ENCODE measurements at regions of chr14 and their contacts with region 1.

Region 1: GRCh38 chr14:33848706-33849454 is 102.0 kb downstream of the EGLN3 start:
- DNase-seq: peak; percentile 27
- H3K4me3 Mint-ChIP-seq: no peak overlapping the region
- H3K27ac Mint-ChIP-seq: no peak overlapping the region
- H3K4me1 Mint-ChIP-seq: peaks cover 2% of the 10 kb centered on the region
- H3K27me3 Mint-ChIP-seq: peaks cover 33% of the 10 kb centered on the region

Region 2: GRCh38 chr14:34098045-34098984 is 249.4 kb after region 1 on chr14:
- CTCF ChIA-PET with region 1: interaction called, 92 read pairs
- DNase-seq: peak; percentile 52
- H3K4me3 Mint-ChIP-seq: no peak overlapping the region
- H3K27ac Mint-ChIP-seq: peak overlapping the region; percentile 46
- H3K4me1 Mint-ChIP-seq: peaks cover 35% of the 10 kb centered on the region
- H3K27me3 Mint-ChIP-seq: peaks cover 33% of the 10 kb centered on the region

Measured in activated naive CD4-positive, alpha-beta T cell treated with anti-CD3 and anti-CD28 coated beads, Interleukin-2, amount 10 ng/mL, durations not matched to agents 7 days and 5 days (primary cell).